Heart right ventricle (tissue), 16 donors: ENCODE measurements at regions of chr1 and their contacts with region 1.

Region 1: GRCh38 chr1:62407405-62408009 is 29.3 kb upstream of the USP1 start:
- DNase-seq: peak in 1 of 2 donors; percentile 38
- ATAC-seq: peak in 4 of 8 donors; percentile 49 to 73 (median 55)
- H3K4me3 ChIP-seq: no peak overlapping the region
- H3K27ac ChIP-seq: no peak overlapping the region
- H3K4me1 ChIP-seq: no peaks in the 10 kb centered on the region
- H3K27me3 ChIP-seq: peaks cover 0 to 12% (median 0%) of the 10 kb centered on the region in 7 donors
- CTCF ChIP-seq: peak; percentile 54 to 89 (median 82)

Region 2: GRCh38 chr1:62082456-62083363 is 324.8 kb before region 1 on chr1:
- intact Hi-C with region 1: loop called in 3 of 10 experiments (anchors 5 to 10 kb)
- DNase-seq: peak in 1 of 2 donors; percentile 15
- ATAC-seq: peak in 3 of 8 donors; percentile 39 to 68 (median 58)
- H3K4me3 ChIP-seq: no peak overlapping the region
- H3K27ac ChIP-seq: no peak overlapping the region
- H3K4me1 ChIP-seq: peaks cover 0 to 15% (median 6%) of the 10 kb centered on the region in 9 donors
- H3K27me3 ChIP-seq: no peaks in the 10 kb centered on the region
- CTCF ChIP-seq: peak; percentile 66 to 93 (median 89)

Region 3: DNA sequence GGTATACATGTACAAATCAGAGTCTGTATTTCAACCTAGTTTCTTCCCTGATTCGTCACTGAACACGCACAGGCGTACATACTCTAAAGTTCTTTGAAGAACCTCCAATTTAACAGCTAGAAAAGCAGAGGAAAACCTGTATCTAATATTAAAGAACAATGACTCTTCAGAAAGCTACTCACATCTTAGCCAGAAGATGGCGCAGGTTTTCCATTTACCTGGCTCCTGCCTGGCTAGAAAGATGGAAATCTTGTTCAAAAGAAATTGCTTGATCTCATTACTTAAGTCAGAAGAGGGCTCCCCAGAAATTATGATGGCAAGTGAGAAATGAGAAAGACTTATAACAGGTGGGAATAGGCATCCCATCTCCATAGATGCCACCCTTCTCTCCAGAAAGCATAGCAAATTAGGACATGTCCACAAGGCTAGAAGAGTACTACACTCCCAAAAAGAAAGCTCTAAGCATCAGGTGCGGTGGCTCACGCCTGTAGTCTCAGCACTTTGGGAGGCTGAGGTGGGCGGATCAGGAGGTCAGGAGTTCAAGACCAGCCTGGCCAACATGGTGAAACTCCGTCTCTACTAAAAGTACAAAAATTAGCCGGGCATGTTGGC is 231.8 kb before region 1 on chr1:
- intact Hi-C with region 1: loop called (anchors 1 to 5 kb)
- DNase-seq: peak in 1 of 2 donors; percentile 32
- ATAC-seq: peak in 1 of 8 donors; percentile 42
- H3K4me3 ChIP-seq: no peak overlapping the region
- H3K27ac ChIP-seq: no peak overlapping the region
- H3K4me1 ChIP-seq: peaks cover 0 to 8% (median 0%) of the 10 kb centered on the region in 9 donors
- H3K27me3 ChIP-seq: peaks cover 0 to 14% (median 0%) of the 10 kb centered on the region in 7 donors
- CTCF ChIP-seq: peak; percentile 73 to 87 (median 81)

Region 4: DNA sequence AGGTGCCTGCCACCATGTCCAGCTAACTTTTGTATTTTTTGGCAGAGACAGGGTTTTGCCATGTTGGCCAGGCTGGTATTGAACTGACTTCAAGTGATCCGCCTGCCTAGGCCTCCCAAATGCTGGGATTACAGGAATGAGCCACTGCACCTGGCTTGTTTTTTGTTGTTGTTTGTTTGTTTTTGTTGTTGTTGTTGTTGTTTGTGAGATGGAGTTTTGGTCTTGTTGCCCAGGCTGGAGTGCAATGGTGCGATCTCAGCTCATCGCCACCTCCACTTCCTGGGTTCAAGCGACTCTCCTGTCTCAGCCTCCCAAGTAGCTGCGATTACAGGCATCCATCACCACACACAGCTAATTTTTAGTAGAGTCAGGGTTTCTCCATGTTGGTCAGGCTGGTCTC is 220.0 kb before region 1 on chr1:
- intact Hi-C with region 1: loop called in 2 of 10 experiments (anchors 2 to 5 kb)
- DNase-seq: no peak
- ATAC-seq: no peak
- H3K4me3 ChIP-seq: no peak overlapping the region
- H3K27ac ChIP-seq: no peak overlapping the region
- H3K4me1 ChIP-seq: no peaks in the 10 kb centered on the region
- H3K27me3 ChIP-seq: peaks cover 0 to 4% (median 0%) of the 10 kb centered on the region in 7 donors
- CTCF ChIP-seq: no peak

Region 5: GRCh38 chr1:62318756-62319544 is 88.6 kb before region 1 on chr1 and contains the start of gene KANK4:
- intact Hi-C with region 1: no loop called
- DNase-seq: no peak
- ATAC-seq: peak in 6 of 8 donors; percentile 37 to 70 (median 54)
- H3K4me3 ChIP-seq: peak within 1 kb of the TSS; percentile 28 to 56 (median 44)
- H3K27ac ChIP-seq: no peak within 1 kb of the TSS
- H3K4me1 ChIP-seq: peaks cover 0 to 10% (median 6%) of the 10 kb centered on the region in 9 donors
- H3K27me3 ChIP-seq: peaks cover 6 to 44% (median 29%) of the 10 kb centered on the region in 7 donors
- CTCF ChIP-seq: peak in 1 of 9 donors; percentile 10
- total RNA-seq, gene KANK4: 0.05 to 0.61 (median 0.24) TPM

Region 6: GRCh38 chr1:62589321-62589720 is 181.8 kb after region 1 on chr1:
- intact Hi-C with region 1: no loop called
- DNase-seq: no peak
- ATAC-seq: no peak
- H3K4me3 ChIP-seq: no peak overlapping the region
- H3K27ac ChIP-seq: no peak overlapping the region
- H3K4me1 ChIP-seq: no peaks in the 10 kb centered on the region
- H3K27me3 ChIP-seq: no peaks in the 10 kb centered on the region
- CTCF ChIP-seq: no peak